Ovary (tissue), 10 donors: ENCODE measurements at regions of chr20 and their contacts with region 1.

Region 1: GRCh38 chr20:33653218-33653899 is 8.8 kb upstream of the C20orf144 start:
- DNase-seq: peak; percentile 75 to 83 (median 79)
- H3K4me3 ChIP-seq: no peak overlapping the region
- H3K27ac ChIP-seq: peak overlapping the region; percentile 26 to 45
- H3K4me1 ChIP-seq: peaks cover 8% of the 10 kb centered on the region
- H3K27me3 ChIP-seq: no peaks in the 10 kb centered on the region
- CTCF ChIP-seq: peak; percentile 56 to 83 (median 82)
- EP300 ChIP-seq: no peak
- POLR2A ChIP-seq: no peak

Region 2: GRCh38 chr20:33450867-33451266 is 202.5 kb before region 1 on chr20:
- intact Hi-C with region 1: loop called in 1 of 4 experiments (anchors 10 kb)
- DNase-seq: no peak
- H3K4me3 ChIP-seq: no peak overlapping the region
- H3K27ac ChIP-seq: no peak overlapping the region
- H3K4me1 ChIP-seq: no peaks in the 10 kb centered on the region
- H3K27me3 ChIP-seq: no peaks in the 10 kb centered on the region
- CTCF ChIP-seq: no peak
- EP300 ChIP-seq: no peak
- POLR2A ChIP-seq: no peak

Region 3: GRCh38 chr20:33460711-33461110 is 192.6 kb before region 1 on chr20:
- intact Hi-C with region 1: loop called in 3 of 4 experiments (anchors 5 to 10 kb)
- DNase-seq: no peak
- H3K4me3 ChIP-seq: no peak overlapping the region
- H3K27ac ChIP-seq: no peak overlapping the region
- H3K4me1 ChIP-seq: no peaks in the 10 kb centered on the region
- H3K27me3 ChIP-seq: no peaks in the 10 kb centered on the region
- CTCF ChIP-seq: no peak
- EP300 ChIP-seq: no peak
- POLR2A ChIP-seq: no peak

Region 4: DNA sequence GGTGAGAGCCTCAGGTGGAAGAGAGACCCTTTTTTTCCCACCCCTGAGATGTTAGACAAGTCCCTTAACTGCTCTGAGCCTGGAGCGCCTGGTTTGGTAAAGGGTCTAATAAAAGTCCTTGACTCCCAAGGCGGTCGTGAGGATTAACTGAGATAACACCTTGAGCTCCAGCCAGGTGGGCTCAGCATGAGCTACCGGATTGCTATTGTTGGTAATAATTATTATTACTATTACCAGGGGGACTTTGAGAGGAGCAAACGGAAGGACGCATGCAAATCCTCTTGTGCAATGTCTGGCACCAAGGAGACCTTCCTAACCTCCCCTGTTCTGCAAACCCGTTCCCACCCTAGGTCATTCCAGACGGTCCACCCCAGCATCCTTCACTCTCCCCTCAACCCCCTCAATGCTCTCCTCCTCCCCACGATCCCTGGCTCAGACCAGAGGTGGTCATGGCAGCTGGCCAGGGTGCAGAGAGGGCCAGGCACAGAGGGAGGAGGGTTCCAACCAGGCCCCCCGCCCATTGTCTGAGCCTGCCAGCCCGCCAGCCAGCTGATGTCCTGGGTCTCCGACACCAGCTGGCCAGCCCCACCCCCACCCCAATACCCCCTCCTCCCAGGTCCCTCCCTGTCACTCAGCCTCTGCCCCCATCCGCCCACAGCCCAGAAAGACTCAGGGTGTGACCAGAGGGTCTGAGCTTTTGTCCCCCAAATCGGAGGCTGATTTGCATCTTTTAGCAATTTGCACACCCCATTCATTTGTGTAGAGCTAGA is 177.8 kb before region 1 on chr20:
- intact Hi-C with region 1: loop called in 1 of 4 experiments (anchors 10 kb)
- DNase-seq: no peak
- H3K4me3 ChIP-seq: no peak overlapping the region
- H3K27ac ChIP-seq: no peak overlapping the region
- H3K4me1 ChIP-seq: peaks cover 2% of the 10 kb centered on the region
- H3K27me3 ChIP-seq: no peaks in the 10 kb centered on the region
- CTCF ChIP-seq: no peak
- EP300 ChIP-seq: no peak
- POLR2A ChIP-seq: no peak

Region 5: GRCh38 chr20:33773412-33774089 is 120.2 kb after region 1 on chr20:
- intact Hi-C with region 1: no loop called
- DNase-seq: no peak
- H3K4me3 ChIP-seq: no peak overlapping the region
- H3K27ac ChIP-seq: no peak overlapping the region
- H3K4me1 ChIP-seq: no peaks in the 10 kb centered on the region
- H3K27me3 ChIP-seq: no peaks in the 10 kb centered on the region
- CTCF ChIP-seq: no peak
- EP300 ChIP-seq: no peak
- POLR2A ChIP-seq: no peak

Region 6: GRCh38 chr20:34129518-34130162 is 476.3 kb after region 1 on chr20:
- intact Hi-C with region 1: no loop called
- DNase-seq: peak; percentile 43 to 66 (median 54)
- H3K4me3 ChIP-seq: no peak overlapping the region
- H3K27ac ChIP-seq: no peak overlapping the region
- H3K4me1 ChIP-seq: no peaks in the 10 kb centered on the region
- H3K27me3 ChIP-seq: no peaks in the 10 kb centered on the region
- CTCF ChIP-seq: peak; percentile 56 to 81 (median 78)
- EP300 ChIP-seq: no peak
- POLR2A ChIP-seq: no peak